ENCODE measurements at regions of chr19 and their contacts with region 1.

Region 1: GRCh38 chr19:50461066-50461875 is 15.0 kb upstream of the EMC10 start:
- DNase-seq: peak; percentile 74
- H3K4me3 Mint-ChIP-seq: no peak overlapping the region
- H3K27ac Mint-ChIP-seq: no peak overlapping the region
- H3K4me1 Mint-ChIP-seq: peaks cover 11% of the 10 kb centered on the region
- H3K27me3 Mint-ChIP-seq: peaks cover 62% of the 10 kb centered on the region

Region 2: GRCh38 chr19:50329146-50329925 is 131.9 kb before region 1 on chr19 and contains the start of gene KCNC3:
- CTCF ChIA-PET with region 1: no interaction called
- DNase-seq: peak; percentile 98
- H3K4me3 Mint-ChIP-seq: peak within 1 kb of the TSS; percentile 81
- H3K27ac Mint-ChIP-seq: peak within 1 kb of the TSS; percentile 98
- H3K4me1 Mint-ChIP-seq: peaks cover 75% of the 10 kb centered on the region
- H3K27me3 Mint-ChIP-seq: peaks cover 89% of the 10 kb centered on the region

Region 3: DNA sequence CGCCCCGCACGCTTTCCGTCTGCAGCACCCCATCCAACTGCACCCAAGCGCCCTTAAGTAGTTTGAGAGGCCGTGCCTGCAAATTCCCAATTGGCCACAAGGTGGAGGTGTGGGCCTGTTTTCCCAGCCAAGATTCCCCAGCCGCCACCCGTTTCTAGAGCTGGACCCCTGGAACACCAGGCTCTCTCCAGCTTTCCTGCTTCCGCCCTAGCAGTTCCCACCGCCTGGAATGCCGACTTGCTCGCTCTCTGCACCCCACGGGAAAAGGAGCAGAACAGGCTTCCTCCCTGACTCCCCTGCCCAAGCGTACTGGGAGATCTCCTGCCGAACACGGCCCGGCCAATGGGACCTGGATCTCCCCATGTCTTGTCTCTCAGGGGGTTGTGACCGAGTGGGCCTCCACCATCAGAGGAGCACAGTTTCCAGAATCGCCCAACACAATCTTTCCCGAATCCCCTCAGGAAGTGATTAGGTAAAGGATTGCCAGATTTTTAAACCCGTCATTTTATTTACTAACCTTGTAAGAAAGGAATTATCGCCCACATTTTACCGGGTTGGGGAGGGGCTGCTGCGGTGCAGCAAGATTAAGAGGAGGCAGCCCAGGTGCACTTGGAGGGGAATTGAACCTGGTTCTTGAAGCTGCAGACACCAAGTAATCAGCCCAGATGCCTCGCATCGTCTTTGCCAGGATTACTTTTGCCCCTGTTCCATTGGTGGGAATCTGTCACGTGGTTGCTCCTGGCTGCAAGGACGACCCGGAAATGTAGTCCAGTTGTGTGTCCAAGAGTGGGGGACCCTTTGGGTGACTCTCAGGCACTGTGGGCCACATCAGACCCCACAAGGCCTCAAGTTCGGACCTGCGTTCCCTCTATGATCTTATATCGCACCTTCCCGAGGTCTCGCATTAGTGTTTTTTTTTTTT is 92.4 kb before region 1 on chr19:
- CTCF ChIA-PET with region 1: interaction called, 15 read pairs
- DNase-seq: peak; percentile 87
- H3K4me3 Mint-ChIP-seq: peak overlapping the region; percentile 88
- H3K27ac Mint-ChIP-seq: peak overlapping the region; percentile 91
- H3K4me1 Mint-ChIP-seq: peaks cover 42% of the 10 kb centered on the region
- H3K27me3 Mint-ChIP-seq: no peaks in the 10 kb centered on the region

Region 4: DNA sequence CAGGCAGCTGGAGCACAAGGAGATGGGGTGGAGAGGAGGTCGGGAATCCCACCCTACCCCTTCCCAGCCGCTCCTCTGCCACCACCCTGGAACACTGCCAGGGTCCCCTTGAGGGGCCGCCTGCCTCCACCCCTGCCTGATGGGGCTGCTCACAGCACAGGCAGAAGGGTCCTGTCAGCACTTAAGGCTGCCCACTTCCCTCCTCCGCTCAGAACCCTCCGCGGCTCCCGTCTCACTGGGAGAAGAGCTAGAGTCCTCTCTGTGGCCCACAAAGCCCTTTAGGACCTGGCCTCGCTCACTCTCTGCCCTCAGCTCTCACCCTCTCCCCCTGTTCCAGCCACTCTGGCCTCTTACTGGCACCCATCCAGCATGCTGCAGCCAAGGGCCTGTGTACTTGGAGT is 80.5 kb before region 1 on chr19:
- CTCF ChIA-PET with region 1: no interaction called
- DNase-seq: no peak
- H3K4me3 Mint-ChIP-seq: no peak overlapping the region
- H3K27ac Mint-ChIP-seq: no peak overlapping the region
- H3K4me1 Mint-ChIP-seq: peaks cover 46% of the 10 kb centered on the region
- H3K27me3 Mint-ChIP-seq: no peaks in the 10 kb centered on the region

Region 5: DNA sequence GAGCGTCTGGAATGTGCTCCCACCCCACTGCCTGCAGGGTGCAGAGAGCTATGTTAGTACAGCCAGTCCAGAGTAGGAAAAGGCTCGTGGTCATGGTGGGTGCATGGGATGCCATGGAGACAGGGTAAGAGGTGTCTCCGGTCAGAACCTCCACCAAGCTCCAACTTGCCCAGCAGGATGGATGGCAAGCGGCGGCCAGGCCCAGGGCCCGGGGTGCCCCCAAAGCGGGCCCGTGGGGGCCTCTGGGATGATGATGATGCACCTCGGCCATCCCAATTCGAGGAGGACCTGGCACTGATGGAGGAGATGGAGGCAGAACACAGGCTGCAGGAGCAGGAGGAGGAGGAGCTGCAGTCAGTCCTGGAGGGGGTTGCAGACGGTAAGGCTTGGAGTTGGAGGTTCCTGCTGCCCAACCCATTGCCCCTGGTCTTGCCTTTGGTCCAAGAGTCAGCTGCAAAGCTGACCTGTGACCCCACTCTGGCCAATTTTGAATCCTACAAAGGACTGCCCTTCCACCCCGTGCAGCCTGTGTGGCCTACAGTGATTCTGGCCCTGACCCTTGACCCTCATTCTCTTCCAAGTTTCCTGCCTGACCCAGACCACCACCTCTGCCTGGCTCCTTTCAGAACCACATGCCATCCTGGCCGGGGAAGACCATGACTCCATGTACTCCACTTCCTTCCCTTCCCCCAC is 62.5 kb before region 1 on chr19:
- CTCF ChIA-PET with region 1: no interaction called
- DNase-seq: no peak
- H3K4me3 Mint-ChIP-seq: no peak overlapping the region
- H3K27ac Mint-ChIP-seq: no peak overlapping the region
- H3K4me1 Mint-ChIP-seq: no peaks in the 10 kb centered on the region
- H3K27me3 Mint-ChIP-seq: peaks cover 3% of the 10 kb centered on the region